Posterior vena cava (tissue), 2 donors: ENCODE measurements at regions of chr21 and their contacts with region 1.

Region 1: GRCh38 chr21:15326032-15326867 is 261.4 kb upstream of the NRIP1 start:
- DNase-seq: no peak

Region 2: GRCh38 chr21:15250384-15250783 is 75.9 kb before region 1 on chr21:
- intact Hi-C with region 1: loop called in 1 of 2 experiments (anchors 2 kb)
- DNase-seq: no peak

Region 3: GRCh38 chr21:15264084-15264665 is 62.1 kb before region 1 on chr21:
- intact Hi-C with region 1: loop called in 1 of 2 experiments (anchors 2 kb)
- DNase-seq: no peak

Region 4: GRCh38 chr21:15631366-15631765 is 305.1 kb after region 1 on chr21:
- intact Hi-C with region 1: no loop called
- DNase-seq: no peak